Activated B cell treated with CpG ODN at 0.5 μM for 24 hours (primary cell): ENCODE measurements at regions of chr12 and their contacts with region 1.

Region 1: DNA sequence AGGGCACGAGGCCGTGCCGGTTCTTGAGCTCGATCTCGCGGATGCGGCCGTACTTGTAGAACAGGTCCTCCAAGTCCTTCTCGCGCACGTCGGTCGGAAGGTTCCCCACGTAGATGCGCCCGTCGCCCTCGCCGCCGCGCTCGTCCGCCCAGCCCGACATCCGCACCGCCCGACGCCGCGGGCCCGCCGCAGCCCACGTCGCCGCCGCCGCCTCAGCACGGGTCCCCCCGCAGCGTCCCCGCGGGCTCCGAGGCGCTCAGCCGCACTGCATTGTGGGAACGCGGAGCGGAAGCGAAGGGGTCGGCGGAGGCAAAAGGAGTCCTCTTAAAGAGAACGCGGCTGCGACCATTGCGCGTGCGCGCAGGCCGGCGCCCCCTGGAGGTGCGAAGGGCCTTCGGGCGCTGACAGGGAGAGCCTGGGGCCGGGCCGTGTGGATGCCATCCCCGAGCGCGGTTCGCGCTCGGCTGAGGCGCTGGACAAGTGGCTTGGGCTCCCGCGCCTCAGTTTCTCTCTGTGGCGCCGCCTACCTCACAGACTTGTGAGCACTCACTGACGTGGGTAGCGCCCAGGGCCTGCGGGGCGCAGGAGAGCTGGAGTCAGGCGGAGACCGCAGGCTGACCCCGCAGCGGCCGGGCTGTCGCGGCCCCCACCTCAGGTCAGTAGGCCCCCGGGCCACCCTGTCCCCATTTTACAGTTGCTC is at the start of gene SRSF9:
- DNase-seq: peak; percentile 99
- ATAC-seq: peak; percentile 88
- H3K4me3 Mint-ChIP-seq: peak within 1 kb of the TSS; percentile 90
- H3K27ac Mint-ChIP-seq: peak within 1 kb of the TSS; percentile 86
- H3K4me1 Mint-ChIP-seq: peaks cover 33% of the 10 kb centered on the region
- H3K27me3 Mint-ChIP-seq: no peaks in the 10 kb centered on the region
- CTCF ChIP-seq: no peak
- total RNA-seq, gene SRSF9: 191 and 192 TPM in 2 replicates

Region 2: DNA sequence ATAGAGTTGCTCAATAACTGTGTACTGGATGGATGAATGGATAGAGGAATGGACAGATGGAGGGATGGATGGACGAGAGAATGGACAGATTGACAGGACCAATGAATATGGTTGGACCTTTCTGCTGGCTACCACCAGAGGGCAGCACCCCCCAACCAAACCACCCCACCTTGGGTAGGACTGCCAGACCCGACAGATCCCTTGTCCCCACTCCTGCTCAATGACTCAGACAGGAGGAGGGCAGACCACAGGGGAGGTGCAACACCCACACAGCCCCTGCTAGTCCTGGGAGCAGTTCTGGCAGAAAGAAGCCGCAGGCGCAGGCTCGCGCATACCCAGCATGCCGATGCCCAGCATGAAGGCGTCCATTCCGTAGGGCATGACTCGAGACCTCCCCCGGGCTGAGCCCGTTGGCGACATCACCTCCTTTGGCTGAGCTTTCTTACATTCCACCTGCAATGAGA is 113.0 kb before region 1 on chr12:
- CTCF ChIA-PET with region 1: interaction called, 6 read pairs
- POLR2A ChIA-PET with region 1: no interaction called
- intact Hi-C with region 1: loop called (anchors 1 kb)
- DNase-seq: peak; percentile 59
- ATAC-seq: peak; percentile 91
- H3K4me3 Mint-ChIP-seq: no peak overlapping the region
- H3K27ac Mint-ChIP-seq: no peak overlapping the region
- H3K4me1 Mint-ChIP-seq: peaks cover 3% of the 10 kb centered on the region
- H3K27me3 Mint-ChIP-seq: peaks cover 26% of the 10 kb centered on the region
- CTCF ChIP-seq: peak; percentile 22

Region 3: DNA sequence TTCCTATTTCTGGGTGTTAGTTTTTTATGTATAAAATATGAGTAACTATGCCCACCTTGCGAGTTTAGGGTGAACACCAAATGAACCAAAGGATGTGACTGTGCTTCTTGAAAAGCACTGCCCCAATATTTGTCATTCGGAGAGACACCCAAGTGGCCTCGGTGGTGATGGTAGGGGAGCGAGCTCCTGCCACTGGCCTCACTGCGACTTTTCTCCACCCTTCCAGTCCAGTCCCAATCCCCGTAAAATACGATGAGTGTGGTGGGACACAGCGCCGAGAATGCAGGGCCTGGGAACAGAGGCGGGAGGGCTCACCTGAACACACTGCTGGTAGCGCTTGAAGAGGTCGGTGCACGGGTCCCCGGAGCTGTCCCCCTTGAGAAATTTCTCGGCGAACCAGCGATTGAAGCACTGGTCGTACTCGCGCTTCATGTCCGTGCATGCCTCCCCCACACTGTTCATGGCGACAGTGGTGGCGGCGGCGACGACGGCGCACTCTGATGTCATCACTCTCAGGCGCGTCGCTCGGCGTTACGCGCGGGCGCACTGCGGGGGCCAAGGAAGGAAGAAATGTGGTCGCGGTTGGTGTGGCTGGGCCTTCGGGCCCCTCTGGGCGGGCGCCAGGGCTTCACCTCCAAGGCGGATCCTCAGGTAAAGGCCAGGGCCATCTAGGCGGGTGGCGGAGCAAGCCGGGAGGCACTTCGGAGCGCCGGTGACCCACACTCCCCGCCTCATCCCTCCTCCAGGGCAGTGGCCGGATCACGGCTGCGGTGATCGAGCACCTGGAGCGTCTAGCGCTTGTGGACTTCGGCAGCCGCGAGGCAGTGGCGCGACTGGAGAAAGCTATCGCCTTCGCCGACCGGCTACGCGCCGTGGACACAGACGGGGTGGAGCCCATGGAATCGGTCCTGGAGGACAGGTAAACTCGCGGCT is 23.4 kb before region 1 on chr12 and contains the starts of genes GATC and TRIAP1:
- CTCF ChIA-PET with region 1: no interaction called
- POLR2A ChIA-PET with region 1: interaction called, 5 read pairs
- intact Hi-C with region 1: loop called (anchors 2 kb)
- DNase-seq: peak; percentile 92
- ATAC-seq: peak; percentile 95
- H3K4me3 Mint-ChIP-seq: peak within 1 kb of the TSS; percentile 96
- H3K27ac Mint-ChIP-seq: peak within 1 kb of the TSS; percentile 95
- H3K4me1 Mint-ChIP-seq: peaks cover 31% of the 10 kb centered on the region
- H3K27me3 Mint-ChIP-seq: no peaks in the 10 kb centered on the region
- CTCF ChIP-seq: no peak
- total RNA-seq, gene GATC: 33.4 and 35.2 TPM in 2 replicates
- total RNA-seq, gene TRIAP1: 18.2 and 18.6 TPM in 2 replicates

Region 4: DNA sequence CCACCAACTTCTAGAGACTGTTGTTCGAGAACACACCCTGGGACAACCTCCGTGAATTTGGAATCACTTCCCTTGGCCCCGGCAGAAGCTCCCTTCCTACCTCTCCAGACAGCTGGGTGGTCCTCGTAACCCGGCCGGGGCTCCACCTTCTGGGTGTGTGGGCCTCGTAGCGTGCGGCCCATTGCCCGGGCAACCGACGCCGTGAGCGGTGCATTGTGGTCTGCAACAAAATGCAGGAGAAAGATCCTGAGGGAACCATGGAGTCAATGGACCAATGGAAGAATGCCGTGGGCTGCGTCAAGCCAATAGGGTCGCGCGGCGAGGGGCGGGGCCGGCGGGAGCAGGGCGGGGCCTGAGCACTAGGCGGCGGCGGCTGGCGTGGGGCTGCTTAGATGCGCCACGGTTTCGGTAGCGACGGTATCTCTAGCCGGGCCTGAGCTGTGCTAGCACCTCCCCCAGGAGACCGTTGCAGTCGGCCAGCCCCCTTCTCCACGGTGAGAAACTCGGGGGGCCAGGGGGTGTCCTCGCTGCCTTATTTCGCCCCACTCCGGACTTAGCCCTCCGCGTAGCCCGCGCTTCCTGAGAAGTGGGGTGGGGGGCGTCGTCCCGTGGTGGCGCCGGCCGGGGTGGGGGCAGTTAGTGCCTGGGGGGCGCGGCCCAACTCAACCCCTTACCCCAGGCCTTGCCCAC is 26.3 kb after region 1 on chr12 and contains the start of gene DYNLL1:
- CTCF ChIA-PET with region 1: interaction called, 16 read pairs
- POLR2A ChIA-PET with region 1: interaction called, 54 read pairs
- intact Hi-C with region 1: loop called (anchors 1 kb)
- DNase-seq: peak; percentile 99
- ATAC-seq: peak; percentile 96
- H3K4me3 Mint-ChIP-seq: peak within 1 kb of the TSS; percentile 96
- H3K27ac Mint-ChIP-seq: peak within 1 kb of the TSS; percentile 91
- H3K4me1 Mint-ChIP-seq: peaks cover 29% of the 10 kb centered on the region
- H3K27me3 Mint-ChIP-seq: no peaks in the 10 kb centered on the region
- CTCF ChIP-seq: no peak
- total RNA-seq, gene DYNLL1: 159 and 180 TPM in 2 replicates

Region 5: GRCh38 chr12:120598674-120599463 is 129.3 kb after region 1 on chr12:
- CTCF ChIA-PET with region 1: no interaction called
- POLR2A ChIA-PET with region 1: interaction called, 10 read pairs
- intact Hi-C with region 1: no loop called
- DNase-seq: no peak
- ATAC-seq: no peak
- H3K4me3 Mint-ChIP-seq: no peak overlapping the region
- H3K27ac Mint-ChIP-seq: no peak overlapping the region
- H3K4me1 Mint-ChIP-seq: no peaks in the 10 kb centered on the region
- H3K27me3 Mint-ChIP-seq: peaks cover 12% of the 10 kb centered on the region
- CTCF ChIP-seq: no peak